Posterior vena cava (tissue), 2 donors: ENCODE measurements at regions of chr11 and their contacts with region 1.

Region 1: GRCh38 chr11:10628508-10629236 is 60.2 kb upstream of the LYVE1 start:
- DNase-seq: no peak

Region 2: GRCh38 chr11:10604340-10604748 is 24.3 kb before region 1 on chr11:
- intact Hi-C with region 1: loop called in 1 of 2 experiments (anchors 1 kb)
- DNase-seq: peak; percentile 86

Region 3: DNA sequence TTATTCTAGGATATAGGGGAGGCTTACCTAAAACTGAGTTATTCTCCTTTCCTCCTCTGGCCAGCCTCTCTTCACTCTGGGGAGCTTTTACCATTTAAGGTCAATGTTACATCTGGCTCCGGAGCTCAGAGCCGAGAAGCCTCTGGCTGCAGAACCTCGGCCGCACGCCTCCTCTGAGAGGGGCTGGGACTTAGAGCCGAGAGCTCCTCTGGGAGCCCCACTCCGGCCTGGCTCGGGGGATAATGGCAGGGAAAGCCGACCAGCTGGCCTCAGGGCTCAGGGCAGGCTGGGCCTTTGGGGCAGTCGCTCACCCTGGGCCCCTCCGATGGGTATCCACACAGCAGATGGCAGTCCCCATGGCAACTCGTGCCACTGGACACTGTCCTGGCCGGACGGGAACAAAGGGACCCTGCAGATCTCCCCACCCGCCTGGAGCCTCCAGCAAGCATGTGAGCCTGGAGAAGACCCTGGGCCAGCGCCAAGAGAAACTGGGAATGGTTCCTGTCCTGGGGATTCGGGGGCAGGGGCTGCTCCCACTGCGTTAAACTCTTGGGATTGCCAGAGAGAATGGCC is 64.9 kb after region 1 on chr11 and contains the start of gene IRAG1:
- intact Hi-C with region 1: loop called in 1 of 2 experiments (anchors 5 kb)
- DNase-seq: peak; percentile 93
- total RNA-seq, gene IRAG1: 348 to 366 TPM

Region 4: DNA sequence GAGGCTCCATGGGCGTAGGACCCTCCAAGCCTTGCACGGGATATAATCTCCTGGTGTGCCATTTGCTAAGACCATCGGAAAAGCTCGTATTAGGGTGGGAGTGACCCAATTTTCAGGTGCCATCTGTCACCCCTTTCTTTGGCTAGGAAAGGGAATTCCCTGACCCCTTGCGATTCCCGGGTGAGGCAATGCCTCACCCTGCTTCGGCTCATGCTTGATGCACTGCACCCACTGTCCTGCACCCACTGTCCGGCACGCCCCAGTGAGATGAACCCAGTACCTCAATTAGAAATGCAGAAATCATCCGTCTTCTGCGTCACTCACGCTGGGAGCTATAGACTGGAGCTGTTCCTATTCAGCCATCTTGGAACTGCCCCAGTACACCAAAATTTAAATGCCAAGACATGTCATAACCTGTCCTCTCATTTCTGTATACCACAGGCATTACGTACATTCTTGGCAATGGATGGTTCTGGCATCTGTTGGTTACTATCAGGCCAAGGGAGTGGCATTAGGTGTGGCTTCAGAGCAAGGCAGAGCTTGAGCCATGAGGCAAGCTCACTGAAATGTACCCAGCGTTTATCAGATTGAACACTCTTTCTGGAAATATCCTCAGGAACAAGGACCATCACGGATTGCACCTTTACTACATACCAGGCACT is 1088.5 kb after region 1 on chr11:
- intact Hi-C with region 1: no loop called
- DNase-seq: no peak

Region 5: DNA sequence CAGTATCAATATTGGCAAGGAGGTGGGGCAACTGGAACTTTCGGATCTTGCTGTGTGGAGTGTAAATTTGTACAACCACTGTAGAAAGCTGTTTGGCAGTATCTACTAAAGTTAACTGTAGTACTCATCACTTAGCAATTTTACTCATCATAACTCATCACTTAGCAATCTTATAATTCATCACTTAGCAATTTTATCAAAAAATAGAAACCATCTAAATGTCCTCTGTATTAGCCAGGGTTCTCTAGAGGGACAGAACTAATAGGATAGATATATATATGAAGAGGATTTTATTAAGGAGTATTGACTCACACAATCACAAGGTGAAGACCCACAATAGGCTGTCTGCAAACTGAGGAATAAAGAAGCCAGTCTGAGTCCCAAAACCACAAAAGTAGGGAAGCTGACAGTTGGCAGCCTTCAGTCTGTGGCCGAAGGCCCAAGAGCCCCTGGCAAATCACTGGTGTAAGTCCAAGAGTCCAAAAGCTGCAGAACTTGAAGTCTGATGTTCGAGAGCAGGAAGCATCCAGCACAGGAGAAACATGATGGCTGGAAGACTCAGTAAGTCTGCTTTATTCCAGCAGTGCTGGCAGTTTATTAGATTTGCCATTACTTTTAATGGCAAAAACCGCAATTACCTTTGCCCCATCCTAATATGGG is 1120.2 kb after region 1 on chr11:
- intact Hi-C with region 1: no loop called
- DNase-seq: no peak